Activated T-helper 2 cell treated with anti-CD3 and anti-CD28 coated beads, Interferon-gamma antibody, Interleukin-2, Interleukin-4, amounts not matched to agents 10 μg/mL and 5 μg/mL and 100 μg/mL, durations not matched to agents 14 hours and 24 hours and 36 hours (primary cell): ENCODE measurements at regions of chr1 and their contacts with region 1.

Region 1: GRCh38 chr1:92298573-92299476 is at the starts of genes GLMN and RPAP2:
- DNase-seq: peak; percentile 75
- H3K4me3 Mint-ChIP-seq: peak within 1 kb of the TSS; percentile 98
- H3K27ac Mint-ChIP-seq: peak within 1 kb of the TSS; percentile 96
- H3K4me1 Mint-ChIP-seq: peaks cover 31% of the 10 kb centered on the region
- H3K27me3 Mint-ChIP-seq: no peaks in the 10 kb centered on the region
- total RNA-seq, gene GLMN: 29.5 and 30.8 TPM in 2 replicates
- total RNA-seq, gene RPAP2: 41.9 and 42.8 TPM in 2 replicates

Region 2: DNA sequence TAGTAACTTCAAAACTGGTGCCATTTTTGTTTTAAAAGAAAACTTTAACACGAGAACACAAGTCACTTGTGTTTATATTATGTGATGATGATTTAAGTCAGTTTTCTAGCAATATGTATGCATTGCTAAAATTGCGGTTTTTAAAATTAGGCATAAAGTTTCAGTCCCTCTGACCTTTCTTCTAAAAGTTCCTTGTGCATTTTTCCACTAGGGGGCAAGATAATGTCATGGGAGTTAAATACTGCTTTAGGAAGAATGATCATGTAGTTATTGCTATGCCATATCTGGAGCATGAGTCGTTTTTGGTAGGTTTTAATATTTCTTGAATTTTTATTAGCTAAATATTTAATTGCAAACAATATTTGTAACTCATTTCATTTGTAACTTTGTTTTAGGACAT is 787.4 kb before region 1 on chr1:
- intact Hi-C with region 1: loop called (anchors 10 kb)
- DNase-seq: no peak
- H3K4me3 Mint-ChIP-seq: no peak overlapping the region
- H3K27ac Mint-ChIP-seq: no peak overlapping the region
- H3K4me1 Mint-ChIP-seq: peaks cover 25% of the 10 kb centered on the region
- H3K27me3 Mint-ChIP-seq: no peaks in the 10 kb centered on the region

Region 3: DNA sequence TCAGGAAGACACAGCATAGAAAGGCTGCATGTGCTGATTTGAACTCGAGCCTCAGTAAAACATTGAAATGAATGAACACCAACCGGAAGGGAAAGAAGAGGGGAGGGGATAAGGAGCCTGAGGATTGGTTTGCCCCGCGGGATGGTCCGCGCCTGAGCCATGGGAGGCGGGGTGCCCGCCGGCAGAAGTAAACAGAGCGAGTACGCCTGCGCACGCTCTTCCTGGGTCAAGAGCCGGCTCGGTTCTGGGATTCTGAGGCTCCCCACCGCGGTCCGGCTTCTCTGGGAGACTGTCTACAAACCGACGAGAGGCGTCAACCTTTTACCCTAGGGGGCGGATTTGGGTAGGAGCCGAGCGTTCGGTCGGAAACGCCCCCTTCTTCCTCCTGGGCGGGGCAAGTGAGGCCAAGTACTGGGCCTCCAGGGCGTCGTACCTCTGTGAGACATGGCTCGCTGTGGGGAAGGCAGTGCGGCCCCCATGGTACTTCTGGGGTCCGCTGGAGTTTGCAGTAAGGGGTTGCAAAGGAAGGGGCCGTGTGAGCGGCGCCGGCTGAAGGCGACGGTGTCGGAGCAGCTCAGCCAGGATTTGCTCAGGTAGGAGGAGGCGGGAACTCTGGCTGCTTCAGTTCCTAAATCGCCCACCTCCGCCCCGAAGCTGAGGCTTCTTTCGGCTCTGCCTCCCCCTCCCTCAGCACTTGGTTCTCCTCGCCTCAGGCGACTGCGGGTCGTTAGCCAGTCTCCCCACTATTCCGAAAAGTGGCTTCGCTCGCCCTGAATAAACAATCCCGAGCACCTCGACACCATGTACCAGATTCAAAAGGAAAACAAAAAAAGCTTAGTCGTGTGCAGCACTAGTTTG is 218.5 kb before region 1 on chr1 and contains the start of gene BTBD8:
- intact Hi-C with region 1: loop called (anchors 10 kb)
- DNase-seq: peak; percentile 82
- H3K4me3 Mint-ChIP-seq: peak within 1 kb of the TSS; percentile 96
- H3K27ac Mint-ChIP-seq: peak within 1 kb of the TSS; percentile 80
- H3K4me1 Mint-ChIP-seq: peaks cover 11% of the 10 kb centered on the region
- H3K27me3 Mint-ChIP-seq: no peaks in the 10 kb centered on the region
- total RNA-seq, gene BTBD8: 1.4 and 2.4 TPM in 2 replicates

Region 4: GRCh38 chr1:92623187-92623778 is 324.5 kb after region 1 on chr1:
- intact Hi-C with region 1: loop called (anchors 1 kb)
- DNase-seq: no peak
- H3K4me3 Mint-ChIP-seq: no peak overlapping the region
- H3K27ac Mint-ChIP-seq: no peak overlapping the region
- H3K4me1 Mint-ChIP-seq: peaks cover 5% of the 10 kb centered on the region
- H3K27me3 Mint-ChIP-seq: peaks cover 13% of the 10 kb centered on the region